ENCODE measurements at regions of chr5 and their contacts with region 1.

Region 1: DNA sequence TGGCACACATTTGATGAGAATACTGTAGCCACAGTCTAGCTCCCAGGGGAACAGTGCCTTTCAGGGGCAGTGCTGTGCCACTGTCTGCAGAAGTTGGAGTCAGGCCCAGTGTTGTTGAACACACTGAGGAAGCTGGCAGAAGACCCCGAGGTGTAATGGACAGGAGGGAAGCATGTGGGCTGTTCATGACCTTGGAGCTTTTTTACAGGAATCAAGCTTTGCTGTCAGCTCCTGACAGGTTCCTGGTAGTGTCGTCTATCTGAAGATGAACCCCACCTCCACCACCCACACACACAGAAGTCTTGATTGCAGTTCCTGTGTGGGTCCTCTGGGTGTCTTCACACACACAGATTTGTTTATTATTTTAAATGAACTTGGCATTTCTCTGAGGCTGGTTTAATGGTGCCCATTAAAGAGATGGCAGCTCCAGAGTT is 40.3 kb upstream of the TNFAIP8 start:
- DNase-seq: peak in 4 of 5 donors; percentile 36 to 69 (median 64)
- H3K4me3 ChIP-seq: no peak overlapping the region
- H3K4me3 Mint-ChIP-seq: peak overlapping the region; percentile 28 to 70 (median 64)
- H3K27ac ChIP-seq: peak overlapping the region; percentile 20
- H3K27ac Mint-ChIP-seq: peak overlapping the region; percentile 78 to 96 (median 87)
- H3K4me1 ChIP-seq: peaks cover 94% of the 10 kb centered on the region
- H3K4me1 Mint-ChIP-seq: peaks cover 89 to 95% (median 94%) of the 10 kb centered on the region in 3 donors
- H3K27me3 ChIP-seq: no peaks in the 10 kb centered on the region
- H3K27me3 Mint-ChIP-seq: no peaks in the 10 kb centered on the region

Region 2: GRCh38 chr5:118987988-118988865 is 327.3 kb before region 1 on chr5 and contains the start of gene DTWD2:
- CTCF ChIA-PET with region 1: interaction called, 13 read pairs
- POLR2A ChIA-PET with region 1: interaction called, 3 read pairs
- DNase-seq: peak; percentile 87 to 98 (median 91)
- H3K4me3 ChIP-seq: peak within 1 kb of the TSS; percentile 67
- H3K4me3 Mint-ChIP-seq: peak within 1 kb of the TSS; percentile 82 to 92 (median 85)
- H3K27ac ChIP-seq: peak within 1 kb of the TSS; percentile 76
- H3K27ac Mint-ChIP-seq: peak within 1 kb of the TSS; percentile 22 to 88 (median 73)
- H3K4me1 ChIP-seq: peaks cover 11% of the 10 kb centered on the region
- H3K4me1 Mint-ChIP-seq: peaks cover 16 to 21% (median 19%) of the 10 kb centered on the region in 3 donors
- H3K27me3 ChIP-seq: no peaks in the 10 kb centered on the region
- H3K27me3 Mint-ChIP-seq: no peaks in the 10 kb centered on the region
- total RNA-seq, gene DTWD2: 3.3 to 3.7 TPM

Region 3: DNA sequence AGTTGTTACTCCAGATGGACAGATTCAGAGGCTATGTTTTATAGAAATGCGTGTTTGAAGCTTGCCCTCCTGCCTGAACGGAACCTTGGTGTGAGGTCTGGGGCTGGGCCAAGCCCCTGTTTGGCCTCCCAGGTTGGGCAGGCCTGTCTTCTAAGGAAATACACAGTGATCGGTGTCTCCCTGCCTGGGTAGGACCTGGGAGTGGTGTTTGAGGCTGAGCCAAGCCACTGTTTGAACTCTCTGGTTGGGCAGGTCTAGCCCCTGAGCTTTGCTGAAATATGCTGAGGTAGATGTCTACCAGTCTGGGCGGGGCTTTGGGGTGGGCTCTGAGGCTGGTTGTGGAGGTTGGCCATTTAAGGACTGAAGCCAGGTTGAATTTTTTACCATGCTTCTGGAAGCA is 154.1 kb before region 1 on chr5:
- CTCF ChIA-PET with region 1: no interaction called
- POLR2A ChIA-PET with region 1: no interaction called
- DNase-seq: no peak
- H3K4me3 ChIP-seq: no peak overlapping the region
- H3K4me3 Mint-ChIP-seq: no peak overlapping the region
- H3K27ac ChIP-seq: no peak overlapping the region
- H3K27ac Mint-ChIP-seq: no peak overlapping the region
- H3K4me1 ChIP-seq: no peaks in the 10 kb centered on the region
- H3K4me1 Mint-ChIP-seq: peaks cover 0 to 1% (median 0%) of the 10 kb centered on the region in 3 donors
- H3K27me3 ChIP-seq: no peaks in the 10 kb centered on the region
- H3K27me3 Mint-ChIP-seq: no peaks in the 10 kb centered on the region

Region 4: DNA sequence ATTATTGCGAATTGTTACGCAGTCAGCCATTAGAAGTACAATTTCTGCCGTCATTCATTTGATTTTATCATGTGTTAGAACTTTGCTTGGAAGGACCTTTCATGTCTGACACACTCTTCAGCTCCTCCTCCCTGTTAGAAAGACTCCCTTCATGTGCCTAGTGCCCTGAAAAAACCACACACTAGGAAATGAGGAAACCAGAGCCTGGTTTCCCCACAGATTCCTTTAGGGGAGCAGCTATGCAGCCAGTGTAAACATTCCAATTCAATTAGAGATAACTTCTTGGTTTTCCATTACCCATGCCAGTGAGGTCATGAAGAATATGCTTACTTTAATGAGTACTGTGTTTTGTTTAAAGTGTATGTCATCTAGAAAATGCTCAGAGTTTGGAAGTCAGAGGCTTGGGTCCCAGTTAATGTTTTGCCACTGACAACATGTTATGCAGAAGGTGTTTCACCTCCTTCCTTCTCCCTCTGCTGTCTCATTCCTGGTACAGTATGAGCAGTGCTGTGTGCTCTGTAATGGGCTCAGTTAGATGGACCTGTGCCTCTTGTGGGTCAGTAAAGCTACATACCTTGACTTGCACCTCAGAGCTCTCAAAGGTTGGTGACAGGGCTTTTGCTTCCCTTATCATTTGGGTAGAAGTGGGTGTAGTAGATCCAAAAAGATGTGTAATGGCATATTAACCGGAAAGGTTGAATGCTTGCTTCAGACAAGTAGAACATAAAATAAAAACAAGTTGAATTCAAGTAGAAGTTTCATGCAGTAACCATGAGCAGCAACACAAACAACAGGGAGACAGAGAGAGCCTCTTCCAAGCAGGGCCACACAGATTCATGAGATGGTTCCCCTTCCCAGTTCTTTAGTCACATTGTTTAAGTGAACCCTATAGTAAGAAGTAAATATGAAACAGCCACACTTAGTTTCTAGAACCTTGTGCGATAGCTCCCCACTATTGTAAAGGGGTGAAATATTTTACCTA is 12.3 kb before region 1 on chr5:
- CTCF ChIA-PET with region 1: interaction called, 20 read pairs
- POLR2A ChIA-PET with region 1: interaction called, 6 read pairs
- DNase-seq: no peak
- H3K4me3 ChIP-seq: peak overlapping the region; percentile 42
- H3K4me3 Mint-ChIP-seq: peak overlapping the region; percentile 29 to 71 (median 63)
- H3K27ac ChIP-seq: no peak overlapping the region
- H3K27ac Mint-ChIP-seq: peak overlapping the region; percentile 81 to 100 (median 96)
- H3K4me1 ChIP-seq: peaks cover 85% of the 10 kb centered on the region
- H3K4me1 Mint-ChIP-seq: peaks cover 92 to 98% (median 97%) of the 10 kb centered on the region in 3 donors
- H3K27me3 ChIP-seq: no peaks in the 10 kb centered on the region
- H3K27me3 Mint-ChIP-seq: peaks cover 0 to 3% of the 10 kb centered on the region in 2 donors

Region 5: DNA sequence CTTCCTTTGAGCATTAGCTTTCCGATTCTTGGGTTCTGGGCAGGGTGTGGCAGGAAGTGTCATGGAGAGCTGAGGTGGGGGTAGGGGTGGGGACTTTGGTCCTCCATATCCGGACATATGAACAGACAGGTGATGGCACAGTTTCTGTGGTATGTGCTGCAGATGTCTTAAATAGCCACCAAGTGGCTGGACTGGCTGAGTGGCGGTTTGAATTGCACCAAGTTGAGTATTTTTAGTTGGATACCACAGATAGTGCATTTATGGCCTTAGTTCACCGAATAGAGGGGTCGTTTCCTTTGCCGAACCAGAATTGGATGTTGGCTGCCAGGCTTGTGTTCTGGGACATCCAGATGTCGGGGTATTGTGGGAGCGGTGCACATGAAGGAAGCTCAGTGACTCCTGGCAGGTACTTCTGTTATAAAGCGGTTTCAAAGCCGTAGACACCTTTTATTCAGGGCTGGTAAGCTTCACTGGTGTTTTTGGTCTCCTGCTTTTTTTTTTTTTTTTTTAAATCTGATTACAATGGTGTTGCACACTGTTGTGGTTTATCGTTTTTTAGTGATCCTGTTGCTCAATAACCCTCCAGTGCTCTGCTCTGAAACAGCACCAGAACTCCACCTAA is 25.2 kb after region 1 on chr5:
- CTCF ChIA-PET with region 1: interaction called, 24 read pairs
- POLR2A ChIA-PET with region 1: interaction called, 9 read pairs
- DNase-seq: peak; percentile 26 to 77 (median 61)
- H3K4me3 ChIP-seq: peak overlapping the region; percentile 54
- H3K4me3 Mint-ChIP-seq: peak overlapping the region; percentile 75 to 93 (median 83)
- H3K27ac ChIP-seq: peak overlapping the region; percentile 52
- H3K27ac Mint-ChIP-seq: peak overlapping the region; percentile 84 to 99 (median 94)
- H3K4me1 ChIP-seq: peaks cover 98% of the 10 kb centered on the region
- H3K4me1 Mint-ChIP-seq: peaks cover 95 to 98% (median 98%) of the 10 kb centered on the region in 3 donors
- H3K27me3 ChIP-seq: no peaks in the 10 kb centered on the region
- H3K27me3 Mint-ChIP-seq: no peaks in the 10 kb centered on the region

Region 6: GRCh38 chr5:119360905-119361593 is 45.5 kb after region 1 on chr5:
- CTCF ChIA-PET with region 1: interaction called, 17 read pairs
- POLR2A ChIA-PET with region 1: interaction called, 10 read pairs
- DNase-seq: no peak
- H3K4me3 ChIP-seq: no peak overlapping the region
- H3K4me3 Mint-ChIP-seq: peak overlapping the region in 6 of 7 donors; percentile 5 to 93 (median 23)
- H3K27ac ChIP-seq: no peak overlapping the region
- H3K27ac Mint-ChIP-seq: peak overlapping the region; percentile 72 to 95 (median 84)
- H3K4me1 ChIP-seq: peaks cover 96% of the 10 kb centered on the region
- H3K4me1 Mint-ChIP-seq: peaks cover 95 to 100% (median 98%) of the 10 kb centered on the region in 3 donors
- H3K27me3 ChIP-seq: no peaks in the 10 kb centered on the region
- H3K27me3 Mint-ChIP-seq: no peaks in the 10 kb centered on the region

Measured in CD8-positive, alpha-beta memory T cell (primary cell).